OCI-LY7 (cell line): ENCODE measurements at regions of chr7 and their contacts with region 1.

Region 1: DNA sequence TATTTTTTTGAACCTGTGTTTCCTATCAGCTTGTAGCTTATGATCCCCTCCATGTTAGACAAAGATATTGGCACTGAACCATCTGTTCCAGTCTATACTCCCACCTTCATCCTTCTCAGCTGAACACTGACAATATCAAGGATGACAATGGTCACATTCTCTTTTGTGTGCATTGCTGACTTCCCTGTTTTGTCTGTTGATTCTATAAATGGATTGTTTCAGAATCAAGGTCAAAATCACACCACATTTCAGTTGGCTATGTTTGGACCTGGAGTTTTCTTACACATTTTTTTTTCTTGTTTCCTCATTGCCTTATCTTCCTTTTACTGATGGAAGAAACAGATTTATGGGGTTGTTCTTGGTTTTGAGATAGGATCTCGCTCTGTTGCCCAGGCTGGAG is 11.3 kb upstream of the SMURF1 start:
- DNase-seq: no peak
- H3K4me3 ChIP-seq: no peak overlapping the region
- H3K27ac ChIP-seq: no peak overlapping the region
- H3K4me1 ChIP-seq: no peaks in the 10 kb centered on the region
- CTCF ChIP-seq: no peak

Region 2: GRCh38 chr7:99030951-99031350 is 124.3 kb before region 1 on chr7:
- CTCF ChIA-PET with region 1: no interaction called
- POLR2A ChIA-PET with region 1: interaction called, 11 read pairs
- intact Hi-C with region 1: no loop called
- DNase-seq: no peak
- H3K4me3 ChIP-seq: no peak overlapping the region
- H3K27ac ChIP-seq: no peak overlapping the region
- H3K4me1 ChIP-seq: peaks cover 3% of the 10 kb centered on the region
- CTCF ChIP-seq: no peak